Activated naive CD4-positive, alpha-beta T cell treated with anti-CD3 and anti-CD28 coated beads, Interleukin-2, amount 10 ng/mL, durations not matched to agents 7 days and 5 days (primary cell): ENCODE measurements at regions of chr1 and their contacts with region 1.

Region 1: DNA sequence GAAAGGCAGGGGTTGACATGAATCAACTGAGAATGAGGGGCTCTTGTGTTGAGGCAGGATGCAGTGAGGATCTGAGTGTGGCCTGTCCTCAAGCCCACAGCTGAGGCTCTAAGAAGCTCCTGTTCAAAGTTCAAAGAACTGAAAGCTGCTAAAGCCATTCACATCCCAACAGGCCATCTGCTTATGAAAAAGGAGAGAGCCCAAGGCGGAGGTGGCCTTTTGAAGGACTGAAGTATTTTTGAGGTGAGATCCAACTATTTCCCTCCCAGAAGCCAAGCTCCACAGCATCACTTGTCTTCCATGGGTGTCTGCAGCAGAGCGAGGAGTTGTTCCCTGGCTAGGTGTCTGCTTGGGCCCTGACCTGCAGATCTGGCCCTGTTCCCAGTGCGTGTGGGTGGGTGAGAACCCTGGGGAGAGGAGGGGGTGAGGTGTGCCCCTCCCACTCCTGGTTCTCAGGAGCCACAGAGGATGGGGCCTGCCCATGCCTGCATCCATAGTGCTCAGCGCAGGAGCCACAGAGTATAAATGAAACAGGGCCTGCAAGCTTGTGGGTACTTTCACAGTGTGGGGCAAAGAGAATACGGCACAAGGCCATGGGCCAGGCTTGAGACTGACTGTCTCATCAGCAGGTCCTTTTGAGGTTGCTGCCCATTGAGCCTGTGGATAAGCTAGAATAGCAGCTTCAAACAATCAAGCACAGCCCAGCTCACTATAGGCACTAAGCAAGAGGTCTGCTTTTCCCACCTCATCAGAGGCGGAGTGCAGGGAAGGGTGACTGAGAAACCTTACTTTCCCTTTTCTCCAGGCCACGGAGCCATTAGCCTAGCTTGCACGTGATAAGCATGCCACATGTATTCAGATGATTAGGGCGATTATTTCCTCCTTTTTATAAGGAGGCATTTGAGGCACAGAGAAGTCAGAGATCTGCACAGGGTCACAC is 15.7 kb downstream of the REG4 start:
- DNase-seq: no peak
- H3K4me3 Mint-ChIP-seq: no peak overlapping the region
- H3K27ac Mint-ChIP-seq: no peak overlapping the region
- H3K4me1 Mint-ChIP-seq: peaks cover 17% of the 10 kb centered on the region
- H3K27me3 Mint-ChIP-seq: no peaks in the 10 kb centered on the region

Region 2: DNA sequence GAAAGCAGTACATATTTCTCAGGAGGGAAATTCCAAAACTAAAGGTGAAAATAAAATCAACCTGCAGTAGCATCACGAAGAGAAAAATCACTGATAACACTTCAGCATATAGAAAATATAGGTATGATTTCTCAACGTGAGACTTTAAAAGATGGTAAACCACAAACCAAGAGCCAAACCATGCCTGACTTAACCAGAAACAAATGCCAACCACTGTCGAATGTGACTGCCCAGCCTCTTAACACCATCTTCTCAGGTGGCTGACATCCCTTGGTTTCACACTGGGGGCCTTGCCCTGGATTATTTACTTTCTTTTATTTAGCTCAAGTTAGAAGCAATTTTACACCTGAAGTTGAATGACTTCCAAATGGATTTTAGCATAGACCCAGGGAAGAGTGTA is 36.9 kb before region 1 on chr1:
- CTCF ChIA-PET with region 1: no interaction called
- DNase-seq: no peak
- H3K4me3 Mint-ChIP-seq: no peak overlapping the region
- H3K27ac Mint-ChIP-seq: no peak overlapping the region
- H3K4me1 Mint-ChIP-seq: peaks cover 10% of the 10 kb centered on the region
- H3K27me3 Mint-ChIP-seq: peaks cover 42% of the 10 kb centered on the region

Region 3: GRCh38 chr1:119808972-119809550 is 13.5 kb after region 1 on chr1:
- CTCF ChIA-PET with region 1: interaction called, 16 read pairs
- DNase-seq: peak; percentile 81
- H3K4me3 Mint-ChIP-seq: no peak overlapping the region
- H3K27ac Mint-ChIP-seq: no peak overlapping the region
- H3K4me1 Mint-ChIP-seq: peaks cover 4% of the 10 kb centered on the region
- H3K27me3 Mint-ChIP-seq: peaks cover 30% of the 10 kb centered on the region

Region 4: DNA sequence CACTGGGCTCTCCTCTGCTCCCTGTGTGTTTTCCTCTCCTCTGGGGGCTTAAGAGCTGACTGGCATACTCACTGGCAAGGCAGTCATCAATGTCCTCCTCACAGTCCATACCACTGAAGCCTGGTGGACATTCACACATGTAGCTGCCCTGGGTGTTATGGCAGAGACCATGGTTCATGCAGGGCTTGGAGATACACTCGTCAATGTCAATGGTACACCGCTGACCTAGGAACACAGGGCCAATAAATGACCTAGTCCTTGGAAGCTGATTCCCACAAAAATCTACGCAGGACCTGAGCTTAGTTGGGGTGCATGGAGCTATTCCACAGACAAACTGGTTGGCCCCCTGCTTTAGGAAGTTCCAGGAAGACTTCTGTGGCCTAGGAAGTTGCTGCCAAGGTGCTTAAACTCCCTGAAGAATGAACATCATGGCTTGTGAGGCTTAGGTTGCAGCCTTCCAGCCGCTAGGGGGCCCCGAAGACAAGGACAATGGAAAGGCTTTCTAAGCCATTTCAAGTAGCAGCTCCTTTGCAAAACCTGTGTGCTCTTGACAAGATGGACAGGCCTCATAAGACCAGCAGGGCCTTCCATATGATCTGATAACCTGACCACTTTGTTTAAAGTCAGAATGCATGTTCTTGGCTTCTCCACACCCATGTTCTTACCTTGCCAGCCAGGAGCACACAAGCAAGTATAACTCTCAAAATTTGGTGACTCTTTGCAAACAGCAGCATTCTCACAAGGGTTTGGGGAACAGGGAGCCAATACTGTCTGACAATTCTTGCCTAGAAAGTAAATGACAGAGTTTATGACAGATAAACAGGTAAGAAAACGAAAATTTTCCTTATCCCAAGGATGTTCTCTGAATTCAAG is 153.0 kb after region 1 on chr1:
- CTCF ChIA-PET with region 1: no interaction called
- DNase-seq: peak; percentile 85
- H3K4me3 Mint-ChIP-seq: no peak overlapping the region
- H3K27ac Mint-ChIP-seq: no peak overlapping the region
- H3K4me1 Mint-ChIP-seq: peaks cover 4% of the 10 kb centered on the region
- H3K27me3 Mint-ChIP-seq: no peaks in the 10 kb centered on the region